ENCODE measurements at regions of chr1 and their contacts with region 1.

Region 1: GRCh38 chr1:197902454-197903195 is at the start of gene C1orf53:
- DNase-seq: peak; percentile 71
- ATAC-seq: peak; percentile 98
- H3K4me3 ChIP-seq: peak within 1 kb of the TSS; percentile 69 to 89 (median 81)
- H3K27ac ChIP-seq: peak within 1 kb of the TSS; percentile 98
- H3K4me1 ChIP-seq: peaks cover 34% of the 10 kb centered on the region
- H3K27me3 ChIP-seq: no peaks in the 10 kb centered on the region; a peak in 1 of 5 replicates
- CTCF ChIP-seq: no peak
- EP300 ChIP-seq: no peak; a peak in 1 of 4 replicates
- POLR2A ChIP-seq: peak; percentile 69 to 83
- RAD21 ChIP-seq: peak; percentile 78; the same call in 1 of the 2 replicates
- total RNA-seq, gene C1orf53: 8.5 and 10.1 TPM in 2 replicates

Region 2: DNA sequence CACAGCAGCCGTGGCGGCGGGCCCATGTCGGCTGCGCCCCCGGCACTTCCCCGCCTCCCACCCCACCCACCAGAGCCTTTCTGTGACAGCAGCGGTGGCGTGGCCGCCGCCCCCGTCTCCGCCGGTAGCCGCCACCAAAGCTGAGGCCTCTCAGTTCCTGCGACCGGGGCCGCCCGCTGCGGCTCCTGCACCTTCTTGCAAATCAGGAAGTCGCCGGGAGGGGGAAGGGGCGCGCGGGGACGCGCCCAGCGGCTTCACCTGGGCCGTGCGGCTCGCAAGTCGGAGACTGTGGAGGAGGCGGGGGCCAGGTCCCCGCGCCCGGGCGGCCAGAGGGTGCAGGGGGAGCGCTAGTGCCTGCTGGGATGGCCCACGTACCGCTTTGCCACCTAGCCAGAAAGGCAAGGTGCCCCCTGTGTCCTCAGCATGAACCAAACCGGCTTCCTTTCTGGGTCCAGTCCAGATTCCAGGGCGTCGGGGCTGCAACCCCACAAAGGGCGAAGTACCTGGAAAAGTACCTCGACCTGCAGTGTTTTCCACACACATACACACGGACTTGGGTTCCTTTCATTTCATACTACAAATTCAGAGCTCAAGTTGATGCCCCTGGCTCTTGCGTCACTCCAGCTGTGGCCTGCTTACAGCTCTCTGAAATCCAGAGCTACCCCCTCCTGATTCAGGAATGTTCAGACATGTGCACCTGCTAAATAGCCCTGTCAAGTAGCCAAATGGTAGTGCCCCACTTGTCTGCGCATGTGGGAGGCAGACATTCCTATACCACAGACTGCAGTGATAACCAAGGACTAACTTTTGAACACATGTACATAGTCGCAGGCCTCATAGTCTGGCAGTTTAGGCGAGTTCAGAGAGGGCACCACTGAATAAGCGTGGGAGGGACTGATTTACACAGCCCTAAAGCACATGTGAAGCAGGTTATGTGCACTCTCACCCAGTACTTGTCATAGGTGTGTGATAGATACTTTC is 127.1 kb before region 1 on chr1 and contains the start of gene DENND1B:
- CTCF ChIA-PET with region 1: no interaction called
- POLR2A ChIA-PET with region 1: interaction called, 4 read pairs
- in situ Hi-C with region 1: no loop called
- intact Hi-C with region 1: loop called (anchors 5 kb)
- DNase-seq: peak; percentile 52
- ATAC-seq: peak; percentile 92
- H3K4me3 ChIP-seq: peak within 1 kb of the TSS; percentile 65 to 93 (median 66)
- H3K27ac ChIP-seq: peak within 1 kb of the TSS; percentile 72
- H3K4me1 ChIP-seq: peaks cover 23% of the 10 kb centered on the region
- H3K27me3 ChIP-seq: no peaks in the 10 kb centered on the region
- CTCF ChIP-seq: peak; percentile 40; the same call in 1 of the 2 replicates
- EP300 ChIP-seq: no peak
- POLR2A ChIP-seq: peak; percentile 40 to 57; a peak in 2 of 4 replicates
- RAD21 ChIP-seq: no peak; the same call in 1 of the 2 replicates
- total RNA-seq, gene DENND1B: 5.7 and 7.5 TPM in 2 replicates

Region 3: DNA sequence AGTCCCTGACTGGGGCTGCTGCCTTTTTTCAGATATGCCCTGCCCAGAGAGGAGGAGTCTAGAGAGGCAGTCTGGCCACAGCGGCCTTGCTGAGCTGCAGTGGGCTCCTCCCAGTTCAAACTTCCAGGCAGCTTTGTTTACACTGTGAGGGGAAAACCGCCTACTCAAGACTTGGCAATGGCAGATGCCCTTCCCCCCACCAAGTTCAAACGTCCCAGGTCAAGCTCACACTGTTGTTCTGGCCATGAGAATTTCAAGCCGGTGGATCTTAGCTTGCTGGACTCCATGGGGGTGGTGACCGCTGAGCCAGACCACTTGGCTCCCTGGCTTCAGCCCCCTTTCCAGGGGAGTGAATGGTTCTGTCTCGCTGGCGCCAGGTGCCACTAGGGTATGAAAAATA is 18.5 kb before region 1 on chr1:
- CTCF ChIA-PET with region 1: no interaction called
- POLR2A ChIA-PET with region 1: interaction called, 51 read pairs
- in situ Hi-C with region 1: no loop called
- intact Hi-C with region 1: no loop called
- DNase-seq: peak; percentile 88
- ATAC-seq: peak; percentile 97
- H3K4me3 ChIP-seq: peak overlapping the region in 2 of 3 experiments; percentile 32 to 59; a peak in 4 of 6 replicates
- H3K27ac ChIP-seq: no peak overlapping the region
- H3K4me1 ChIP-seq: peaks cover 33% of the 10 kb centered on the region
- H3K27me3 ChIP-seq: no peaks in the 10 kb centered on the region
- CTCF ChIP-seq: no peak; the same call in 1 of the 2 replicates
- EP300 ChIP-seq: peak in 1 of 2 experiments; percentile 69; a peak in 2 of 4 replicates
- POLR2A ChIP-seq: no peak
- RAD21 ChIP-seq: no peak

Region 4: GRCh38 chr1:197915862-197916499 is 13.4 kb after region 1 on chr1:
- CTCF ChIA-PET with region 1: no interaction called
- POLR2A ChIA-PET with region 1: interaction called, 25 read pairs
- in situ Hi-C with region 1: no loop called
- intact Hi-C with region 1: loop called (anchors 1 kb)
- DNase-seq: peak; percentile 67
- ATAC-seq: peak; percentile 92
- H3K4me3 ChIP-seq: peak overlapping the region; percentile 30 to 68 (median 50)
- H3K27ac ChIP-seq: no peak overlapping the region
- H3K4me1 ChIP-seq: peaks cover 57% of the 10 kb centered on the region
- H3K27me3 ChIP-seq: peaks cover 20 to 91% of the 10 kb centered on the region in 2 experiments
- CTCF ChIP-seq: peak; percentile 69
- EP300 ChIP-seq: no peak
- POLR2A ChIP-seq: no peak
- RAD21 ChIP-seq: peak; percentile 63

Measured in HepG2 (cell line).